HCT116 (cell line): ENCODE measurements at regions of chr1 and their contacts with region 1.

Region 1: GRCh38 chr1:204565617-204566582 is 49.7 kb downstream of the MDM4 start:
- DNase-seq: peak; percentile 68
- ATAC-seq: peak; percentile 83
- H3K4me3 ChIP-seq: 0 out of 4 replicates have a peak overlapping the region, but pooled peaks of 1 of the 2 experiments have one; percentile 2
- H3K27ac ChIP-seq: no peak overlapping the region
- H3K4me1 ChIP-seq: peaks cover 21 to 35% of the 10 kb centered on the region in 2 experiments
- H3K27me3 ChIP-seq: no peaks in the 10 kb centered on the region
- CTCF ChIP-seq: peak; percentile 55 to 96 (median 72)
- POLR2A ChIP-seq: no peak
- RAD21 ChIP-seq: peak; percentile 89

Region 2: DNA sequence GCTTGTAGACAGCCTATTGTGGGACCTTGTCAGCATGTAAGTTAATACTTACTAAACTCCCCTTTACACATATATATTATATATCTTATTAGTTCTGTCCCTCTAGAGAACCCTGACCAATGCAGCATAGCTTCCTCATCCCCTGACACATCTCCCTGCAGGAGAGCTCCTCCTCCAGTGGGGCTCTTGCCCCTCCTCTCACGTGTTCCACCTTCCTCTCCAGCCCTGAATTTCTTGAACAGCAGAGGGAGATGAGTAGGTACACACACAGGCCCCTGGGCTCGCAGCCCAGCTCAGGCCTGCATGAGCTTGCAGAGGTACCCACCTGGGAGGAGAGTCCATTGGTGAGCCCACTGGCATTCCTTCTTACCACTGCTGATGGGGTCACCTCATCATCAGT is 324.9 kb before region 1 on chr1:
- CTCF ChIA-PET with region 1: no interaction called
- POLR2A ChIA-PET with region 1: no interaction called
- RAD21 ChIA-PET with region 1: no interaction called
- intact Hi-C with region 1: no loop called
- DNase-seq: no peak
- ATAC-seq: peak; percentile 47; the same call in 1 of the 2 replicates
- H3K4me3 ChIP-seq: no peak overlapping the region
- H3K27ac ChIP-seq: no peak overlapping the region
- H3K4me1 ChIP-seq: no peaks in the 10 kb centered on the region
- H3K27me3 ChIP-seq: no peaks in the 10 kb centered on the region
- CTCF ChIP-seq: no peak
- POLR2A ChIP-seq: no peak
- RAD21 ChIP-seq: no peak

Region 3: DNA sequence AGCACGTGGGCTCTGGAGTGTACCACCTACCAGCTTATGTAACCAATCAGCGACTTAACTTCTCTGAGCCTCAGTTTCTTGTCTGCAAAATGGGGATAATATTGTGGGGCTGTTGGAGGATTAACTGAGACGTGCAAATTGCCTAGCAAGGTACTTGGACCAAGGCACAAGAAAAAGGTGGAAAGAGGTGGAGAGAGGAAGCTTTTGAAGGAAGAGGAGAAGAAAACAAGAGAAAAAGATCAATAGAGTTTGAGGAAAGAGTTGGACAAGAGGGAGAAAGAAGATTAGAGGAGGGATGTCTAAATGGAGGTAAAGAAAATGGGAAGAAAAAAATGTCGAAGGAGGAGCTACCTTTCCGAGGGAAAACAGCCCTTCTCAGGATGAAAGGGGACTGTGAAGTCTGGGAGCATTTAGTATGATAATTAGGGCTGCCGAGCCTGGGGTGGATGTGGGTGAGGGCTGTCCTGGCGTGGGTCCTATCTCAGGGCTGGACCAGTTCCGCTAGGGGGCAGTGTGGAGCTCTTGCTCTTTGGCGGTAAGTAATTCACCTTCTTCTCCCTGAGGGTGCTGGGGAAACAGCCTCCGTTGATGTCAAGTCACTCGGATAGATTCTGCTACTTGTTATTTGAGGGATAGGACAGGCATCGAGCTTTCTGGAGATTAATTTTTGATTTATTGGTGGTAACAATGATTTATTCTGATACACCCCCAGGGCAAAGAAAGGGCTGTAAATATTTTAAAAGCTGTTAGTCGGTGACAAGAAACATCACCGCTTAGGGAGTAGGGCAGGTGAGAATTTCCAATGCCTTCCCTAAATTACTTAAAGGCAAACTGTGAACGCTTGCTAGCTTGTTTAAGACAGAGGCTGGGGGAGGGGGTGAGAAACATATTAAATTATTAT is 225.8 kb after region 1 on chr1:
- CTCF ChIA-PET with region 1: interaction called, 17 read pairs
- POLR2A ChIA-PET with region 1: no interaction called
- RAD21 ChIA-PET with region 1: no interaction called
- intact Hi-C with region 1: no loop called
- DNase-seq: peak; percentile 72
- ATAC-seq: peak; percentile 99
- H3K4me3 ChIP-seq: no peak overlapping the region
- H3K27ac ChIP-seq: no peak overlapping the region
- H3K4me1 ChIP-seq: 0 out of 4 replicates have a peak, but pooled peaks cover 0 to 5% of the 10 kb centered on the region in 2 experiments
- H3K27me3 ChIP-seq: peaks cover 26% of the 10 kb centered on the region; the same call in 1 of the 2 replicates
- CTCF ChIP-seq: peak; percentile 60 to 97 (median 92); a peak in 5 of 6 replicates
- POLR2A ChIP-seq: no peak
- RAD21 ChIP-seq: peak; percentile 36

Region 4: GRCh38 chr1:204941421-204942338 is 375.8 kb after region 1 on chr1:
- CTCF ChIA-PET with region 1: interaction called, 9 read pairs
- POLR2A ChIA-PET with region 1: no interaction called
- RAD21 ChIA-PET with region 1: no interaction called
- intact Hi-C with region 1: loop called (anchors 10 kb)
- DNase-seq: peak; percentile 34
- ATAC-seq: peak; percentile 93
- H3K4me3 ChIP-seq: no peak overlapping the region
- H3K27ac ChIP-seq: no peak overlapping the region
- H3K4me1 ChIP-seq: no peaks in the 10 kb centered on the region
- H3K27me3 ChIP-seq: peaks cover 18% of the 10 kb centered on the region; the same call in 1 of the 2 replicates
- CTCF ChIP-seq: peak; percentile 87 to 95 (median 95)
- POLR2A ChIP-seq: no peak
- RAD21 ChIP-seq: peak; percentile 76